CD4-positive, alpha-beta memory T cell (primary cell): ENCODE measurements at regions of chr2 and their contacts with region 1.

Region 1: GRCh38 chr2:27050281-27050995 is 1.0 kb upstream of the AGBL5 start:
- DNase-seq: peak; percentile 93 to 94 (median 93)
- H3K4me3 ChIP-seq: peak overlapping the region; percentile 89 to 93
- H3K4me3 Mint-ChIP-seq: peak overlapping the region; percentile 93 to 100 (median 99)
- H3K27ac ChIP-seq: peak overlapping the region; percentile 78
- H3K27ac Mint-ChIP-seq: peak overlapping the region; percentile 98 to 100 (median 100)
- H3K4me1 ChIP-seq: peaks cover 14% of the 10 kb centered on the region
- H3K4me1 Mint-ChIP-seq: peaks cover 14 to 28% (median 20%) of the 10 kb centered on the region in 4 donors
- H3K27me3 ChIP-seq: no peaks in the 10 kb centered on the region
- H3K27me3 Mint-ChIP-seq: peaks cover 6 to 13% of the 10 kb centered on the region in 2 donors

Region 2: GRCh38 chr2:26852405-26853306 is 197.8 kb before region 1 on chr2:
- CTCF ChIA-PET with region 1: no interaction called
- POLR2A ChIA-PET with region 1: no interaction called
- intact Hi-C with region 1: no loop called
- DNase-seq: no peak
- H3K4me3 ChIP-seq: no peak overlapping the region
- H3K4me3 Mint-ChIP-seq: no peak overlapping the region
- H3K27ac ChIP-seq: no peak overlapping the region
- H3K27ac Mint-ChIP-seq: no peak overlapping the region
- H3K4me1 ChIP-seq: peaks cover 21% of the 10 kb centered on the region
- H3K4me1 Mint-ChIP-seq: peaks cover 0 to 13% (median under 1%) of the 10 kb centered on the region in 4 donors
- H3K27me3 ChIP-seq: peaks cover 23% of the 10 kb centered on the region
- H3K27me3 Mint-ChIP-seq: peaks cover 23 to 28% of the 10 kb centered on the region in 2 donors

Region 3: DNA sequence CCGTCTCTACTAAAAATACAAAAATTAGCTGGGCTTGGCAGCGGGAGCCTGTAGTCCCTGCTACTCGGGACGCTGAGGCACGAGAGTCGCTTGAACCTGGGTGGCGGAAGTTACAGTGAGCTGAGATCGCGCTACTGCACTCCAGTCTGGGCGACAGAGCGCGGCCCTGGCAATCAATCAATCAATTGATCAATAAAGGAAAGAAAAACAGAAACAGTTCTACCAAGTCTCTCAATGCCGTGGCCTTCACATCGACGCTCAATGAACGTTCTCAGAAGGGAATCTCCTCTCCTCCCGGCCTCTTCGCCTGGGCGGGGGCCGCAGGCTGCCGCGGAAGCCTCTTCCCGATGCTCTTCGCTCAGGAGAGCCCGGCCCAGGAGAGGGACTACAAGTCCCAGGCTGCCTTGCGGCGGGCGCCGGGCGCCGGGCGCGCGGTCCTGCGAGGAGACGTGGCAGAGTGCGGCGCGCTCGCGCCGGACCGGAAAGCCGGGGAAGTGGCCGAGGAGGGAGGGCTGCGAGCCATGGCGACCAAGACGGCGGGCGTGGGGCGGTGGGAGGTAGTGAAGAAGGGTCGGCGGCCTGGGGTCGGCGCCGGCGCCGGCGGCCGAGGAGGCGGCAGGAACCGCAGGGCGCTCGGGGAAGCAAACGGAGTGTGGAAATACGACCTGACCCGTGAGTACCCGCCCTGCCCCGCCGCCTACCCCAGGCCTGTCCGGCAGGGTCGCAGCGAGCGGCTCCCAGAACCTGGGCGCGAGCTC is 17.8 kb before region 1 on chr2 and contains the start of gene TMEM214:
- CTCF ChIA-PET with region 1: interaction called, 11 read pairs
- POLR2A ChIA-PET with region 1: interaction called, 72 read pairs
- intact Hi-C with region 1: loop called (anchors 1 kb)
- DNase-seq: peak; percentile 65 to 80 (median 73)
- H3K4me3 ChIP-seq: peak within 1 kb of the TSS; percentile 94 to 95
- H3K4me3 Mint-ChIP-seq: peak within 1 kb of the TSS; percentile 94 to 98 (median 96)
- H3K27ac ChIP-seq: peak within 1 kb of the TSS; percentile 77
- H3K27ac Mint-ChIP-seq: peak within 1 kb of the TSS; percentile 81 to 96 (median 95)
- H3K4me1 ChIP-seq: peaks cover 28% of the 10 kb centered on the region
- H3K4me1 Mint-ChIP-seq: peaks cover 19 to 49% (median 36%) of the 10 kb centered on the region in 4 donors
- H3K27me3 ChIP-seq: no peaks in the 10 kb centered on the region
- H3K27me3 Mint-ChIP-seq: no peaks in the 10 kb centered on the region
- total RNA-seq, gene TMEM214: 97.3 to 99.8 TPM

Region 4: GRCh38 chr2:27079233-27080139 is 29.0 kb after region 1 on chr2:
- CTCF ChIA-PET with region 1: interaction called, 7 read pairs
- POLR2A ChIA-PET with region 1: interaction called, 402 read pairs
- intact Hi-C with region 1: loop called (anchors 1 kb)
- DNase-seq: no peak
- H3K4me3 ChIP-seq: no peak overlapping the region
- H3K4me3 Mint-ChIP-seq: no peak overlapping the region
- H3K27ac ChIP-seq: no peak overlapping the region
- H3K27ac Mint-ChIP-seq: peak overlapping the region in 1 of 7 donors; percentile 89
- H3K4me1 ChIP-seq: peaks cover 39% of the 10 kb centered on the region
- H3K4me1 Mint-ChIP-seq: peaks cover 23 to 43% (median 36%) of the 10 kb centered on the region in 4 donors
- H3K27me3 ChIP-seq: no peaks in the 10 kb centered on the region
- H3K27me3 Mint-ChIP-seq: peaks cover 0 to 2% of the 10 kb centered on the region in 2 donors

Region 5: DNA sequence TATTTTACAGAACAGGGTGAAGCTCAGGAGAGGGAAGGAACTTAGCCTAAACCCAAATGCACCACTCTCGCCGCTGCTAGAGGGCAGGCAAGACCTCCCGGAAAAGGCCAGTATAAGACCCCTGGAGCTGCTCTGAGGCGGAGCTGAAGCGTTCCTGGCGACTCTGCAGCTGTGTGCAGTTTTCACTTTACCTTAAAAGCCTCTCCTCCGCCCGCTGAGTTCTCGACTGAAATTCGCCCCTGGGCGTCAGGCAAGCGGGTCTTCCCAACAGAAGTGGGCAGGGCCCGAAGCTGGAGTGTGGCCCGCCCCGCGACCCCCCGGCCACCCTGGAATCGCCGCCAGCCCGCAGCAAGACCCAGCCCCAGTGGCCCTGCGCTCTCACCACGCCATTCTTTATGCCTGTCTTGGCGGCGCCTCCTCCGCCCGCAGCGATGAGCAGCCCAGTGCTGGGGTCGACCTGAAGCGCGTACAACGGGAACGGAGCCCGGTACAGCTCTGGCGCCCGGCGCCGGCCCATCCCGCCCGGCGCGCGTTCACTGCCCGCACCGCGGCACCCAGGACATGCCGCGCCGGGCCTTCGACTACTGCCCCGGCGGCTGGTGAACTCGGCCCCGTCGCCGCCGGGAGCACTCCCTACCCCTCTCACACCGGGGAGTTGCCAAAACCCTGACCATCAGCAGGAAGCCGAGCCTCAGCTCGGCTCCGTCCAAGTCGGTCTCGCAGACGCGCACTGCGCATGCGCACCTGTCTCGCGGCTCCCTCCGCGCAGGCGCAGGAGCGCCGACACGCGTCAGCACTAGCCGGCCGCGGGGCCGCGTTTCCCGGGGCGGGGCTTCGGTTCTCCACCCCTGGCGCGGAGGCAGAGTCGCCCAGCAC is 83.7 kb after region 1 on chr2 and contains the start of gene PREB:
- CTCF ChIA-PET with region 1: no interaction called
- POLR2A ChIA-PET with region 1: interaction called, 9 read pairs
- intact Hi-C with region 1: loop called (anchors 1 kb)
- DNase-seq: peak; percentile 94 to 98 (median 98)
- H3K4me3 ChIP-seq: peak within 1 kb of the TSS; percentile 52 to 89
- H3K4me3 Mint-ChIP-seq: peak within 1 kb of the TSS; percentile 92 to 99 (median 96)
- H3K27ac ChIP-seq: peak within 1 kb of the TSS; percentile 92
- H3K27ac Mint-ChIP-seq: peak within 1 kb of the TSS; percentile 80 to 99 (median 98)
- H3K4me1 ChIP-seq: peaks cover 26% of the 10 kb centered on the region
- H3K4me1 Mint-ChIP-seq: peaks cover 12 to 36% (median 26%) of the 10 kb centered on the region in 4 donors
- H3K27me3 ChIP-seq: no peaks in the 10 kb centered on the region
- H3K27me3 Mint-ChIP-seq: no peaks in the 10 kb centered on the region
- total RNA-seq, gene PREB: 64.5 to 65.3 TPM

Region 6: DNA sequence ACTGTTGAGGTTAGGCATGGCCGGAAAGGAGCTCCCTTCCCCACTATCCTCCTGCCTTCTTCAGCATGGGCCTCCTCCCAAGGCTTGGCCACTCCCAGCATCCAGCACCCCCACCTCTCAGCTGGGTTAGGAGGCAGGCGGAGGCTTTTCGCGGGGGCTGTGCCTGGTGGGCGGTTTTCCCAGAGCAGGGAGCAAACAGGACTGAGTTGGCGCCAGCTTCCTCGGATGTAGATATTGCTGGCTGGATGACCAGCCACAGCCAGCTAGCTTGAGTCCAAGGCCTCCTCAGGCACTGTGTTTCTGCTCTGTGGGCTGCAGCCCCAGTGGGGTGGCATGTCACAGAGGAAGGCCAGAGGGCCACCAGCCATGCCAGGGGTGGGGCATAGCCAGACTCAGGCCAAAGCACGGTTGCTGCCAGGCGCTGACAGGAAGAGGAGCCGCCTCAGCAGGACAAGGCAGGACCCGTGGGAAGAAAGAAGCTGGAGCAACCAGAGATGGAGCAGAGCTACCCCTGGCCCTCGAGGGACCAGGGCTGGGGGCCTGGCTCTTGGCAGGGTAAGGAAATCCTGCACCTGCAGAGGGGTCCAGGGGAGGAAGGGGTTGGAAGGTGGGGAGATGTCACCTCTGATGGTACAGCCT is 98.5 kb after region 1 on chr2 and contains the start of gene TCF23:
- CTCF ChIA-PET with region 1: no interaction called
- POLR2A ChIA-PET with region 1: no interaction called
- intact Hi-C with region 1: no loop called
- DNase-seq: no peak
- H3K4me3 ChIP-seq: no peak within 1 kb of the TSS
- H3K4me3 Mint-ChIP-seq: no peak within 1 kb of the TSS
- H3K27ac ChIP-seq: no peak within 1 kb of the TSS
- H3K27ac Mint-ChIP-seq: no peak within 1 kb of the TSS
- H3K4me1 ChIP-seq: no peaks in the 10 kb centered on the region
- H3K4me1 Mint-ChIP-seq: no peaks in the 10 kb centered on the region
- H3K27me3 ChIP-seq: no peaks in the 10 kb centered on the region
- H3K27me3 Mint-ChIP-seq: peaks cover 3 to 8% of the 10 kb centered on the region in 2 donors
- total RNA-seq, gene TCF23: not detected

Region 7: GRCh38 chr2:27322766-27323595 is 272.5 kb after region 1 on chr2 and contains the start of gene MPV17:
- CTCF ChIA-PET with region 1: no interaction called
- POLR2A ChIA-PET with region 1: interaction called, 10 read pairs
- intact Hi-C with region 1: no loop called
- DNase-seq: peak; percentile 82 to 89 (median 82)
- H3K4me3 ChIP-seq: peak within 1 kb of the TSS; percentile 81 to 97
- H3K4me3 Mint-ChIP-seq: peak within 1 kb of the TSS; percentile 95 to 100 (median 96)
- H3K27ac ChIP-seq: peak within 1 kb of the TSS; percentile 95
- H3K27ac Mint-ChIP-seq: peak within 1 kb of the TSS; percentile 96 to 100 (median 98)
- H3K4me1 ChIP-seq: peaks cover 25% of the 10 kb centered on the region
- H3K4me1 Mint-ChIP-seq: peaks cover 12 to 28% (median 18%) of the 10 kb centered on the region in 4 donors
- H3K27me3 ChIP-seq: no peaks in the 10 kb centered on the region
- H3K27me3 Mint-ChIP-seq: no peaks in the 10 kb centered on the region
- total RNA-seq, gene MPV17: 89.3 to 93.3 TPM